GM10248 (cell line): ENCODE measurements at regions of chr6 and their contacts with region 1.

Region 1: DNA sequence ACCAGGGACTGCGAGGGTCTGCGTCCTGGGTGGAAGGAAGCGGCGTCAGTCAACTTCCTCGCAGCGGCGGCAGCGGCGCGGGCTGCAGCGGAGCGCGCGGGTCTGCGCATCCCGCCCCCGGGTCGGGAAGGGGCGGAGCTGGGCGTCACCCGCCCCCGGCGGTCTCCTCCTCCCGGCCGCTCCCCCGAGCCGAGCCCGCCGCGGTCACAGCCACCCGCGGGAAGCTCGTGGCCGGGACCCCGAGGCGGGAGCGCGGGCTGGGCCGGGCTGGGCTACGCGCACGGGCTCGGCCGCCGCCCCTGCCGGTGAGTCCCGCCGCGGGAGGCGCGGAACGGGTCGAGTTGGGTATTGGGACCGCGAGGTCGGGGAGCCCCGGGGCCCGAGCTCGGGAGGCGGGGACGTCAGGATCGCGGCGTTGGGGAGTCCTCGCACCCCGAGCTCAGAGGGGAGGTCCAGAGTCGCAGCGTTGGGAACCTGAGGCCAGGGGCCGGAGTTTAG is at the start of gene PAQR8:
- DNase-seq: peak; percentile 95
- CTCF ChIP-seq: no peak

Region 2: GRCh38 chr6:52377538-52378221 is 15.7 kb after region 1 on chr6:
- CTCF ChIA-PET with region 1: interaction called, 13 read pairs
- POLR2A ChIA-PET with region 1: no interaction called
- DNase-seq: no peak
- CTCF ChIP-seq: no peak